ENCODE measurements at regions of chr3 and their contacts with region 1.

Region 1: GRCh38 chr3:69665026-69665737 is 74.1 kb upstream of the MITF start:
- DNase-seq: peak in 3 of 42 donors; percentile 12 to 46 (median 26)

Region 2: DNA sequence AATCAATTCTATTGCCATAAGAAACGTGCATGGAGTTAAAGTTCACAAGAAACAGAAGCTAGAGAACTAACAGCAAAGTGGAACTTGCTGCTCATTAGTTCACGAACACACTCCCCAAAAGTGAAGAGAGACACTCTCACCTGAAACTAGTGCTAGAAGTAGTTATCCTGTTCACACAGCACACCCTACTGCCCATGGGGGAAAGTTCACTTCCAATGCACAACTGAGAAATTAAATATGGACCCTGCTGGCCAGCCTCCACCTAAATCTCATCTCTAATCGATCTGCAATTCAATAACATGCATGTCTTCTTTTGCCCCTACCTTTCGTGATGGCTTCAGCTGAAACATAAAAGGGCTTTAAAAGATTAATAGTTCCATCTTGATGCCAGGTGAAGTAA is 239.9 kb before region 1 on chr3:
- intact Hi-C with region 1: loop called (anchors 10 kb)
- DNase-seq: peak in 20 of 42 donors; percentile 15 to 59 (median 42)

Region 3: GRCh38 chr3:69560818-69561217 is 104.4 kb before region 1 on chr3:
- intact Hi-C with region 1: loop called (anchors 10 kb)
- DNase-seq: no peak

Region 4: DNA sequence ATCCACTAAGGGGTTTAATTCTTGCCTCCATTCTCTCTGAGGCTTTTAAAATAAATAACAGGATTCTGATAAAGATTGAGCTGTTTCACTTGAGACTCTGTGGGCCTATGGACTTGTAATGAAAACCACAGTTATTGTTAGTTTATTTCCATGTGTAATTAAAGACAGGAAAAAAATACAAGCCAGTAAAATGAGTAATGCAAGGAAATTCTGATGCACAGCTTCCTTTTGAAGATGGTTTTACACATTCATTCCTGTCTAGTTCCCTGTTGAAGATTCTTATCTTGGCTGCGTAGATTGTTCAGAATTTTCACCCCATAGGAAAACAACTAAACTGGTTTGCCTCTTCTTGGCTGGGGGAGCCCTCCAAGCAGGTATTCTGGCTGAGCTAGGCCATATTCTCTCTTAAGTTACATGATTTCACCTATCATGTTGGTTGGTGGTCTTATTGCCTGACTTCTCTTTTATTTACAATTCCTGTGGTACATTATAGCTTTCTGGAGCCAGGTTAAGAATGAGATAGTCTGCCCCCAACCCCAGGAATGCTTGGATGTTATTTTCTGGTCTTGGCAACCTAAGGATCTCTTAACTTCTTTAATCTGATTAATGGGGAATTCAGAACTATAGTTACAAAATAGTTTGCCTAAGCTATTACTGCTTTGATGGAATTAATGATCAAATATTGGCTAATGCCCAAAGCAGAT is 141.7 kb after region 1 on chr3:
- intact Hi-C with region 1: no loop called
- DNase-seq: no peak

Region 5: DNA sequence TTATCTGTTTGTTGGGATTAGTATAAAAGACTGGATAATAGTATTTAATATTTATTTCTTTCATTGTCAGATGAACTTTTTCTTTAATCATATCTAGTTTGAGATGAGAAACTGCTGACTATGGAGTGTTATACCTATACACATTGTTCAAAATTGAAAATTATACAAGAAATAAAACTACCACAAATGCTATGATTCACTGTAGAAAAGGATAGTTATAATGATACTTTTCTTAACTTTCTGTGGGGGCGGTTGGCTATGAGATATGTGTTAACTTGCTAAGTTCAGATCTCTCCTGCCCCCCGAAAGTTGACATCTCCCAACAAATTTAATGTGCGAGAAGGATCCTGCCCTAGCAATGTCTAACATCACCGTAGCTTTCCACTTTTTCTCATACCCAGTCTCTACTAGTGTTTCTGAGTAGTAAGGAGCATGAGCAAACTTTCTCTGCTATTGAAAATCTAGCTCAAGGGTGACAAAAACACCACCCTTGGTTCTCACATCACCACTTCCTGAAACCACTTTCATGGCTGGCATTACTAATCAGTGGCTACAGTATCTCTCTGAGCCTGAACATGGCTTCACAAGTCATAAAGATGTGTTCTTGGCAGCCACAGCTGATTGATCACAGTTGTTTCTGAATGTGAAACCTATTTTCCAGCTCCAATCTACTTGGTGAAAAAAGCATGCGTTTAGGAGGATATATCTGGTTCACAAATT is 318.5 kb after region 1 on chr3:
- intact Hi-C with region 1: no loop called
- DNase-seq: no peak